ENCODE measurements at regions of chr4 and their contacts with region 1.

Region 1: DNA sequence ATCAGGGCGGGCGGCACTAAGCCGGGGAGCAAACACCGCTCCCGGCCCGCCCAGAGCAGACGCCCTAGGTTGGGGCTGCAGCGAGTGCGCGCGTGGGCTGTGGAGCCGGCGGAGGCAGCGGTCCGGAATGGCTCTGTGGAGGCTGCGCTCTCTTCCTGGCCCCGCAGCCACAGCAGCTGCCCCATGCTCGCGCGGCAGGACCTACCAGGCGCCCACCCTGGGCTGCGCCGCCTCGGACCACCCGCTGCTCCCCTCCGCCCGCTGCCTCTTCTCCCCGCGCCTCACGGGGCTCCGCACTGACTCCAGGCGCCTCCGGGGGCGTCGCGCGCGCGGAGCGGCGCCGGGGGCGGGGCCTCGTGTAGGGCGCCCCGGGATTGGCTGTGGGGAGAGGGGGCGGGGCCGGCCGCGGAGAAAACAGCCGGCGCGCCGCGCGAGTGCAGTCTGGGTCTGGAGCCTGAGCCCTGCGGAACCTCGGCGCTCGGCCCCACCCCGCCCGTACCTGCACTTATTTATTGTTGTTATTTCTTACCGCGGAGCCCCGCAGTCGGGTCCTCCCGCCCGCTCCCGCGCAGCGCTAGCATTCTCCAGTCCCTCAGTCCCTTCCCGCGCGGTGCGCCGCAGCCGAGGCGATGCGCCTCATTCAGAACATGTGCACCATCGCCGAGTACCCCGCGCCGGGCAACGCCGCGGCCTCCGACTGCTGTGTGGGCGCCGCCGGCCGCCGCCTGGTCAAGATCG is at the start of gene RASL11B:
- DNase-seq: peak; percentile 91
- total RNA-seq, gene RASL11B: 23.8 TPM

Region 2: GRCh38 chr4:52750819-52751486 is 111.1 kb before region 1 on chr4 and contains the start of gene ERVMER34-1:
- intact Hi-C with region 1: loop called (anchors 2 kb)
- DNase-seq: peak; percentile 75
- total RNA-seq, gene ERVMER34-1: 3.4 TPM

Measured in cardiac septum (tissue), 1 donor.